Heart left ventricle (tissue), 16 donors: ENCODE measurements at regions of chr12 and their contacts with region 1.

Region 1: GRCh38 chr12:79547735-79548609 is 142.8 kb downstream of the PAWR start:
- DNase-seq: peak in 1 of 5 donors; percentile 34
- ATAC-seq: peak in 3 of 4 donors; percentile 59 to 75 (median 73)
- H3K4me3 ChIP-seq: no peak overlapping the region
- H3K27ac ChIP-seq: peak overlapping the region in 4 of 12 donors; percentile 2 to 8 (median 6)
- H3K4me1 ChIP-seq: peaks cover 0 to 22% (median 6%) of the 10 kb centered on the region in 12 donors
- H3K27me3 ChIP-seq: no peaks in the 10 kb centered on the region
- CTCF ChIP-seq: peak; percentile 52 to 81 (median 65)
- POLR2A ChIP-seq: no peak

Region 2: GRCh38 chr12:79420146-79420618 is 127.8 kb before region 1 on chr12:
- intact Hi-C with region 1: loop called in 1 of 10 experiments (anchors 10 kb)
- DNase-seq: no peak
- ATAC-seq: no peak
- H3K4me3 ChIP-seq: no peak overlapping the region
- H3K27ac ChIP-seq: no peak overlapping the region
- H3K4me1 ChIP-seq: peaks cover 0 to 7% (median 0%) of the 10 kb centered on the region in 12 donors
- H3K27me3 ChIP-seq: no peaks in the 10 kb centered on the region
- CTCF ChIP-seq: peak in 7 of 12 donors; percentile 6 to 52 (median 22)
- POLR2A ChIP-seq: no peak